GM13977 (cell line): ENCODE measurements at regions of chr14 and their contacts with region 1.

Region 1: DNA sequence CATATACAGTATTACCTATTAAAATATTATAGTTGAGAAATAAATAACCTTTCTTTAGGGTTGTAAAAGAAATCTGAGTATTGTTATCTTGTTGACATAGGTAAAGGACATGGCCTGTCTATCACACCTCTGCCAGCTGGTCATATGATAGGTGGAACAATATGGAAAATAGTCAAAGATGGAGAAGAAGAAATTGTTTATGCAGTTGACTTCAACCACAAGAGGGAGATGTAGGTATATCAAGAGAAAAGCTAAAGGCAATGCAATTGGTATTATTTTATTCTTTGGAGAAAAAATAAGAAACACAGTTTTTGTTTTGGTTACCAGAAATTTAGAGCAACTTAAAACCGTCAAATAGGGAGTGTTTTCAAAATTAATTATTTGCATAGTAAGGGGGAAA is 13.5 kb downstream of the CPSF2 start:
- DNase-seq: no peak
- CTCF ChIP-seq: peak; percentile 42

Region 2: DNA sequence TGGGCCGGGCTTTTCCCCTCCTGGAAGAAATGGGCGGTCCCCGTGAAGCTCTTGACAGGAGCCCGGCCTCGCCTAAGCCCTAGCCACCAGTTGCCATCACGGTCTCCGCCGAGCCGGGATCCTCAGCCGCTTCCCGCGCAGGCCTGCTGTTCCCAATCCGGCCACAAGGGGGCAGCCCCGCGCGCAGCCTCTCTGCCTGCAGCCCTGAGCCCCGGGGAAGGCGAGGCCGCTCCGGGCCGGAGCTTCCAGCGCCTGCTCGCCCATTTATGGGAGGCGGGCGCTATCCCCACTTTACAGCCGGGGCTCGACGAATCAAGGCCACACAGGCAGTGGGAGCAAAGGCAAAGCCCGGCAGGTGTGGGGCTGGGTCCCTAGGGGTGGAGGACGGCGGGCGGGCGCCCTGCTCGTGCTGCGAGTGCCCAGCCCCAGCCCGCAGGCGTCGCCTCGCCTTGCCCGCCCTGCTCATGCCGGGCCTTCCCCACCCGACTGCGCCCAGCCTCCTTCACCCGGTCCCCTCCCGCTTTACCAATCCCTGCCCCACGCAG is 551.7 kb after region 1 on chr14:
- in situ Hi-C with region 1: loop called (anchors 25 kb)
- DNase-seq: peak; percentile 93
- CTCF ChIP-seq: peak; percentile 98